Naive thymus-derived CD4-positive, alpha-beta T cell (primary cell): ENCODE measurements at regions of chr19 and their contacts with region 1.

Region 1: GRCh38 chr19:17496337-17496997 is 15.0 kb upstream of the PGLS start:
- DNase-seq: peak; percentile 61 to 82 (median 71)
- ATAC-seq: peak; percentile 100
- H3K4me3 ChIP-seq: peak overlapping the region; percentile 16
- H3K4me3 Mint-ChIP-seq: peak overlapping the region in 4 of 10 donors; percentile 11 to 46 (median 23)
- H3K27ac ChIP-seq: no peak overlapping the region
- H3K27ac Mint-ChIP-seq: peak overlapping the region in 4 of 9 donors; percentile 26 to 72 (median 50)
- H3K4me1 ChIP-seq: peaks cover 8 to 15% of the 10 kb centered on the region in 2 donors
- H3K4me1 Mint-ChIP-seq: peaks cover 13 to 30% (median 27%) of the 10 kb centered on the region in 7 donors
- H3K27me3 ChIP-seq: no peaks in the 10 kb centered on the region
- H3K27me3 Mint-ChIP-seq: no peaks in the 10 kb centered on the region

Region 2: GRCh38 chr19:17522988-17523872 is 26.8 kb after region 1 on chr19:
- CTCF ChIA-PET with region 1: interaction called, 12 read pairs
- POLR2A ChIA-PET with region 1: interaction called, 5 read pairs
- intact Hi-C with region 1: no loop called
- DNase-seq: peak in 7 of 9 donors; percentile 26 to 51 (median 45)
- ATAC-seq: peak; percentile 86
- H3K4me3 ChIP-seq: peak overlapping the region; percentile 21
- H3K4me3 Mint-ChIP-seq: peak overlapping the region; percentile 74 to 86 (median 80)
- H3K27ac ChIP-seq: peak overlapping the region; percentile 64
- H3K27ac Mint-ChIP-seq: peak overlapping the region; percentile 87 to 98 (median 93)
- H3K4me1 ChIP-seq: peaks cover 10 to 23% of the 10 kb centered on the region in 2 donors
- H3K4me1 Mint-ChIP-seq: peaks cover 16 to 32% (median 26%) of the 10 kb centered on the region in 7 donors
- H3K27me3 ChIP-seq: no peaks in the 10 kb centered on the region
- H3K27me3 Mint-ChIP-seq: no peaks in the 10 kb centered on the region